ENCODE measurements at regions of chr2 and their contacts with region 1.

Region 1: DNA sequence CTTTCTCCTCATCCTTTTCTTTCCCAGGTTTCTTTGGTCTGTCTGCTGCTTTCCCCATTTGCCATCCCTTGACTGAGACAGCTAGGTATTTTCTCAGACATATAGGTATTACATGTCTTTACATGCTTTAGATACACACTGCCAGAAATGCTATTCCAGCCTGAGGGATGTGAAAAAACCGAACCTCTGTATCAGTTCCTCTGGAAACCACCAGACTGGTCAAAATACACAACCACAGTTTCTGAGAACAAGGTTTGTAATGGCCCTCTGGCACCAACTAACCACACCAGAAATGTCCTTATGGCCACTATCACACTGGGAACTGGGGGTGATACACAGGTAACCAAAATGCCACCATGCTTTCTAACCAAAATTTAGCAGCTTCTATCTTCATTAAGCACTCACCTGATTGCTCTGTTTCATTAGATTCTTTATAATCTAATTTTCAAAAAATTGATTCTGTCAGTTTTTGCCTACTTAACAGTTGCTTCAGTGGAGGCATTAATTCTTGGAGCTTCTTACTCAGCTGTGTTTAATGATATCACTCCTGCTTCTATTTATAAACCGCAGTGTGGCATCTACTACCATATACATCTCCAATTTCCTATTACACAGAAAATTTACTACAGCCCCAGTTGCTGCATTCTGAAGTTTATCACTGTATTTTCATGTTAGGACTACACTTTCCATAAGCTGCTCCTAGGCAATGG is 243.5 kb downstream of the WDPCP start:
- DNase-seq: no peak
- H3K4me3 ChIP-seq: no peak overlapping the region
- H3K27ac ChIP-seq: no peak overlapping the region
- H3K4me1 ChIP-seq: no peaks in the 10 kb centered on the region
- CTCF ChIP-seq: no peak

Region 2: GRCh38 chr2:63378589-63378988 is 33.9 kb after region 1 on chr2:
- CTCF ChIA-PET with region 1: no interaction called
- POLR2A ChIA-PET with region 1: interaction called, 3 read pairs
- intact Hi-C with region 1: loop called (anchors 5 kb)
- DNase-seq: no peak
- H3K4me3 ChIP-seq: no peak overlapping the region
- H3K27ac ChIP-seq: no peak overlapping the region
- H3K4me1 ChIP-seq: no peaks in the 10 kb centered on the region
- CTCF ChIP-seq: no peak